PC-9 (cell line): ENCODE measurements at regions of chr11 and their contacts with region 1.

Region 1: GRCh38 chr11:6022956-6023355 is 7.6 kb downstream of the OR56A1 start:
- DNase-seq: no peak
- H3K4me3 ChIP-seq: no peak overlapping the region
- H3K27ac ChIP-seq: no peak overlapping the region
- H3K4me1 ChIP-seq: no peaks in the 10 kb centered on the region
- H3K27me3 ChIP-seq: no peaks in the 10 kb centered on the region
- CTCF ChIP-seq: peak; percentile 49

Region 2: DNA sequence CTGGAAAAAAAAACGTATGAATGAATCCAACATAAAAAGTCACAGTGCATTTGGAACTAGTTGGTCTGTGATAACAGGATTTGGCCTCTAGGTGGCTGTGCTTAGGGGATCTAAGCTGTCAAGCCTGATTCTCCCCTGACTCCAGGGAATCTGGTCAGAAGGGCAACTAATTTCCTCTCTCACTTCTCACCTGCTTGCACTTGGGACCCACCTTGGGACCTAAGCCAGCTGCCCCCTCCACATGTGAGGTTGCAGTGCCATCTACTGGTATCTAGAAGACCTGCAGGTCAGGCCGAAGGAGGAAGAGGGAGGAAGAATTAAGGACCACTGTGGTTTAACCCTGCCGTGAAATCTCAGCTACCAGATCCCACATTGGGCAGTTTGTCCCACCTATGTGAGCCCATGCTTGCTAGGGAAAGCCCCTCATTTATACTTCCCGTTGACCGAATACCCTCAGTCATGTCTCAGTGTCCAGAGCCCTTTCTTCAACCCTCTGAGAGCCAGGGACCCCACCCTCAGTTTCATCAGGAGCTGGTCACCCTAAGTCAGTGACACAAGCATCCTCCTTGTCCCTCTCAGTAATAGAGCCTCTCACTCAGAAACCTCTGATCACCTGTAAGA is 330.5 kb after region 1 on chr11:
- CTCF ChIA-PET with region 1: no interaction called
- POLR2A ChIA-PET with region 1: no interaction called
- intact Hi-C with region 1: loop called (anchors 1 kb)
- DNase-seq: peak; percentile 59 to 67
- H3K4me3 ChIP-seq: no peak overlapping the region
- H3K27ac ChIP-seq: no peak overlapping the region
- H3K4me1 ChIP-seq: no peaks in the 10 kb centered on the region
- H3K27me3 ChIP-seq: no peaks in the 10 kb centered on the region
- CTCF ChIP-seq: peak; percentile 83

Region 3: DNA sequence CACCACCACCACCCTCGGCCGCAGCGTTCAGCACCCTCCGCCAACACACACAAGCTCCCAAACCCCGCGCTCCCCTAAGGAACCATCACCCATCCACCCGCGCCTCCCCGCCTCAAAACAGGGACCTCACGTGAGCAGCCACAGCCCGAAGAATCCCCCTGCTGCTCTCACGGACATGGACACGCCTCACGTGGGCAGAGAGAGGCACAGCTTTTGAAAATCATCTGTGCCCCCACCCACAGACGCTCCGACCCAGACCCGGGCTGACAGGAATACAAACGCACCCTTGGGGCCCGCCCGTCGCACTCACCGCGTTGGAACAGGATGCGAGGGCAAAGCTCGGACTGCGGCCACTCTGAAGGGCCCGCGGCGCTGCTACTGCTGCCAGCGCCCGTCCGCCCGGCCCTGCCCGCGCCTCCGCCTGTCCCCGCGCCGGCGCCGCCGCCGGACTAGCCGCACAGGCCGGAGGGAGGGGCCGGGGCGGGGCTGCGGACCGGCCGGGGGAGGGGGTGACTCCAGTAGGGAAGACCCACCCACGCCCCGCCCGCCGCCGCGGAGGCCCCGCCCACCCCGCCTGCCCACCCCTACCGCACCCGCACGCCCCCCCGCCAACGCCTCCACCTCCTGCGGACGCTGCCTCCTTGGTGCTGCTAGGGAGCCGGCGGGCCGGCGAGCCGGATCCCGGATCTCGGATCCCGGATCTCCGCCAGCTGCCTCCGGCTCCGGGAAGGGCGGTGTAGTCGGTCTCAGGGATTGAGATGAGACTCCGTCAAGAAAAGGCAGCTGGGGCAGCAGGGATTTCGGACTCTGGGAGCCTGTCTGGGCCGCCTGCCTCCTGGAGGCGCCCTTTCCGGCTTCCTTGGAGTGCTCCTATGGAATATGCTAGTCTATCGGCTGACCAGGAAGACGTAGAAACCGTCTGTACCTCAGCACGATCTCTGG is 450.8 kb after region 1 on chr11 and contains the start of gene TRIM3:
- CTCF ChIA-PET with region 1: no interaction called
- POLR2A ChIA-PET with region 1: interaction called, 16 read pairs
- intact Hi-C with region 1: no loop called
- DNase-seq: peak; percentile 63 to 78
- H3K4me3 ChIP-seq: peak within 1 kb of the TSS; percentile 71; the same call in 1 of the 2 replicates
- H3K27ac ChIP-seq: peak within 1 kb of the TSS; percentile 68
- H3K4me1 ChIP-seq: no peaks in the 10 kb centered on the region
- H3K27me3 ChIP-seq: no peaks in the 10 kb centered on the region
- CTCF ChIP-seq: peak; percentile 22; the same call in 1 of the 2 replicates
- total RNA-seq, gene TRIM3: 7.1 and 9.0 TPM in 2 replicates